ENCODE measurements at regions of chr10 and their contacts with region 1.

Region 1: DNA sequence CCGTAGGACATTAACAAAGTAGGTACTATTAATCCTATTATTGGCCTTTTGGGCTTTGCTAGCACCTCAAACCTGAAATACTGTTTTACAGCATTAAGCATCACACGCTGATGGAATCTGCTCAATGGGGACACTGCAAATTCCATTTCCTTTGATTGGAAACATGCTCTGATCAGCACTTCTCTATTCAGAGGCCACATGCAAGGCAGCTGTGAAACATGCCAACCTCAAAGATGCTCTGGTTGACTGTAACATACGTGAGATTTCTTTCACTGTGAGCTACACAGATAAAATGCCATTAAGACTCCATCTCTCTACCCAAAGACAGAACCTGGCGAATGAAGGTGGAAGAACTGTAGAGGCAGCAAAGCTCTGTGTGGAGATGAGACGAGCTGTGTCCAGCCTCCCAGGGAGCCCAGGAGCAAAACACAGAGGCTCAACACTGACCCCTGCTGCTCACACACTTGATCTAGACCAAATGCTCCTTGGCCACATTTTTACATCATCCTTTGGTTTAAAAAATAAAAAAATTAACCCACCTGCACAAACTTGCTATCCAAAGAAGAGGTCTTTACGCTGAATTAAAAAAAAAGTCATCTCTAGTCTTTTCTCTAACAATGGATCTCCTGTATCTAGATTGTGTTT is 8.0 kb downstream of the RSU1 start:
- DNase-seq: peak; percentile 62
- H3K4me3 ChIP-seq: no peak overlapping the region
- H3K27ac ChIP-seq: no peak overlapping the region
- H3K4me1 ChIP-seq: peaks cover 3% of the 10 kb centered on the region
- H3K27me3 ChIP-seq: no peaks in the 10 kb centered on the region
- CTCF ChIP-seq: peak; percentile 69

Region 2: GRCh38 chr10:15684768-15685167 is 1124.4 kb before region 1 on chr10:
- CTCF ChIA-PET with region 1: no interaction called
- POLR2A ChIA-PET with region 1: no interaction called
- intact Hi-C with region 1: no loop called
- DNase-seq: no peak
- H3K4me3 ChIP-seq: no peak overlapping the region
- H3K27ac ChIP-seq: no peak overlapping the region
- H3K4me1 ChIP-seq: no peaks in the 10 kb centered on the region
- H3K27me3 ChIP-seq: peaks cover 63% of the 10 kb centered on the region
- CTCF ChIP-seq: no peak

Region 3: DNA sequence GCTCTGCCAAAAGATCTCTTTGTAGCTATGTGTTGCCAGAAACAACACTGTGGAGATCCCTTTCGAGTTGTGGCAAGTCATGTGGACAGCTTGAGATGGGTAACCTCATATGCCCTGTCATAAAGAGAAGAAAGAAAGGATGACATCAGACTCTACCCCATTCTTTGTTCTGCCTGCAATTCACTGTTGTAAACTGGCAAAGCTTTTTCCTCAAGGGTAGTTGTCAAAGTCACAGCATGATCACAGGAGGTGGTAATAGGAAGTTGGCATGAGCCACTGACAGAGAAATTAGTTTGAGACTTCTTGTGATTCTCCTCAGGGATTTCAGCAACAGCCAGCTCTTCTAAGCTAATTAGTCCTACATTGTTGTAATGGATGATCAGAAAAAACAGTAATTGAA is 929.5 kb before region 1 on chr10:
- CTCF ChIA-PET with region 1: interaction called, 3 read pairs
- POLR2A ChIA-PET with region 1: no interaction called
- intact Hi-C with region 1: loop called (anchors 10 kb)
- DNase-seq: peak; percentile 94
- H3K4me3 ChIP-seq: no peak overlapping the region
- H3K27ac ChIP-seq: no peak overlapping the region
- H3K4me1 ChIP-seq: peaks cover 12% of the 10 kb centered on the region
- H3K27me3 ChIP-seq: peaks cover 73% of the 10 kb centered on the region
- CTCF ChIP-seq: no peak

Region 4: GRCh38 chr10:16348891-16349290 is 460.3 kb before region 1 on chr10:
- CTCF ChIA-PET with region 1: no interaction called
- POLR2A ChIA-PET with region 1: no interaction called
- intact Hi-C with region 1: no loop called
- DNase-seq: no peak
- H3K4me3 ChIP-seq: no peak overlapping the region
- H3K27ac ChIP-seq: no peak overlapping the region
- H3K4me1 ChIP-seq: no peaks in the 10 kb centered on the region
- H3K27me3 ChIP-seq: peaks cover 17% of the 10 kb centered on the region
- CTCF ChIP-seq: no peak

Region 5: GRCh38 chr10:16545116-16545736 is 264.0 kb before region 1 on chr10:
- CTCF ChIA-PET with region 1: no interaction called
- POLR2A ChIA-PET with region 1: no interaction called
- intact Hi-C with region 1: no loop called
- DNase-seq: peak; percentile 54
- H3K4me3 ChIP-seq: no peak overlapping the region
- H3K27ac ChIP-seq: no peak overlapping the region
- H3K4me1 ChIP-seq: no peaks in the 10 kb centered on the region
- H3K27me3 ChIP-seq: peaks cover 49% of the 10 kb centered on the region
- CTCF ChIP-seq: peak; percentile 78

Measured in A673 (cell line).